SK-N-SH (cell line): ENCODE measurements at regions of chr20 and their contacts with region 1.

Region 1: GRCh38 chr20:51372176-51372803 is 170.2 kb downstream of the NFATC2 start:
- DNase-seq: peak; percentile 86
- H3K4me3 ChIP-seq: no peak overlapping the region
- H3K27ac ChIP-seq: peak overlapping the region in 1 of 2 experiments; percentile 32; a peak in 1 of 4 replicates
- H3K4me1 ChIP-seq: peaks cover 6 to 24% of the 10 kb centered on the region in 2 experiments; a peak in 2 of 4 replicates
- H3K27me3 ChIP-seq: no peaks in the 10 kb centered on the region
- CTCF ChIP-seq: peak; percentile 77
- EP300 ChIP-seq: no peak
- RAD21 ChIP-seq: peak; percentile 93

Region 2: DNA sequence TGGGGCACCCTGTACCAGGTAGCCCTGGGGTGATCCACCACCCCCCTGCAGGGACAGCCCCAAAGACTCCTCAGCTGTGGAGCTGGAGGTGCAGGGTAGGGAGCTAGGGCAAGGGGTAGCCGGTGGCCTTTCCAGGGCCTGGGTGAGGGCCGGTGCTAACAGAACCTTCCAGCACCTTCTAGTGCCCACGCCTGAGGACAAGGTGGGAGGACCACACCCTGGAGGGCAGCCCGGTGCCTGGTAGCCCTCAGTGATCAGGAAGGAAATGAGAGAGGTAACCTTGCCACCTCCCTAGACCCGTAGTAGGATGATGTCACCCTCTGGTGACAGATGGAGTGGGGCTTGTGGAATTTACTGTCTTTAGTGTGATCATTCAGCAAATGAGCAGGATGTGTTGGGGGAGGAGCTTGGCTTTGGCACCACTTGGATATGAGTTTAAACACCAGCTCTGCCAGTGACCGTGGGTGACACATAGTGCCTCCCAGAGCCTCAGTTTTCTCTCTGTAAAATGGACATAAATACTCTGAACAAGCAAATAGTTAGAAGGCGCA is 17.4 kb before region 1 on chr20:
- CTCF ChIA-PET with region 1: interaction called, 29 read pairs
- POLR2A ChIA-PET with region 1: no interaction called
- DNase-seq: no peak
- H3K4me3 ChIP-seq: no peak overlapping the region
- H3K27ac ChIP-seq: peak overlapping the region in 1 of 2 experiments; percentile 87; a peak in 2 of 4 replicates
- H3K4me1 ChIP-seq: peaks cover 0 to 22% of the 10 kb centered on the region in 2 experiments; a peak in 2 of 4 replicates
- H3K27me3 ChIP-seq: no peaks in the 10 kb centered on the region
- CTCF ChIP-seq: no peak
- EP300 ChIP-seq: no peak
- RAD21 ChIP-seq: no peak

Region 3: GRCh38 chr20:51360451-51361221 is 11.7 kb before region 1 on chr20:
- CTCF ChIA-PET with region 1: interaction called, 29 read pairs
- POLR2A ChIA-PET with region 1: no interaction called
- DNase-seq: no peak
- H3K4me3 ChIP-seq: no peak overlapping the region
- H3K27ac ChIP-seq: peak overlapping the region in 1 of 2 experiments; percentile 100; a peak in 2 of 4 replicates
- H3K4me1 ChIP-seq: peaks cover 0 to 14% of the 10 kb centered on the region in 2 experiments; a peak in 2 of 4 replicates
- H3K27me3 ChIP-seq: no peaks in the 10 kb centered on the region
- CTCF ChIP-seq: no peak
- EP300 ChIP-seq: peak in 1 of 2 experiments; percentile 95; a peak in 3 of 4 replicates
- RAD21 ChIP-seq: no peak

Region 4: DNA sequence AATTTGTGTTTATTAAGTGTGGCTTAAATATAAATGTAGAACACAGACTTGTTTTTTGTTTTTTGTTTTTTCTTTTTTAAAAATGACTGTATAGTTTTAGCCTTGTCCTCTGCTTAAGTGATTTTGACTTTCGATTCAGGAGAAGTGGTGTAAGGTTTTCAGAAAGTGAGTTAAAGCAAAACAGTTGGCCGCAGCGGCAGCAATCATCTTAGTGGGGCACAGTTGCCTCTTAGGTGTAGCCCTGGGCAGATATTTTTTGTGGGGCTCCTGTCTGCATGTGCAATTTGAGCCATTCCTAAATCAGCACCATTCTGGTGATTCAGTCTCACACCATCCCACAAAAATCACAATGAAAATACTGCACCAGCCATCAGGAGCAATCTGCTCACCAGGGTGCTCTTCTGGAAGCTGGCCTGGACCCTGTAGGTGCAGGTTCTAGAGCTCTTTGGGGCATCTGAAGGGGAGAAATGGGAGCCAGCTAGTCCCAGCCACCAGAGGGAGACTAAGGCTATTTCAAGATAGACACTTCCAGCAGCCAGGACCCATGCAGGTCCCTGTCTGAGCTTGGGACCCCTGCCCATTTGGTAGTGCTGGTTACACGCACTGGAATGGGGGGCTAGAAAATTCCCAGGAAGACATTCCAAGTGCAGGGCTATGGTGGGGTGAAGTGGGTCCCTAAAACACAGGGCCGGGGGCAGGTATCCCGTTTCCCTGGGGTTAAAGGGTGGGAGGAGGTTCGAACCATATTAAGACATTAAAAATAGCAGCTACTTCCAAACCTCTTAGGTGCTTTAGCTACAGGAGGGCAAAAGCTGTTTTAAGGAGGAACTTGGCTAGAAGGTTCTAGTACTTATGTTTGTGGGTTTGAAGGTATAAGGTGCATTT is 13.6 kb after region 1 on chr20:
- CTCF ChIA-PET with region 1: interaction called, 26 read pairs
- POLR2A ChIA-PET with region 1: no interaction called
- DNase-seq: peak; percentile 56
- H3K4me3 ChIP-seq: no peak overlapping the region
- H3K27ac ChIP-seq: no peak overlapping the region
- H3K4me1 ChIP-seq: peaks cover 0 to 10% of the 10 kb centered on the region in 2 experiments; a peak in 2 of 4 replicates
- H3K27me3 ChIP-seq: no peaks in the 10 kb centered on the region
- CTCF ChIP-seq: peak; percentile 64
- EP300 ChIP-seq: no peak
- RAD21 ChIP-seq: peak; percentile 76

Region 5: GRCh38 chr20:51624157-51624731 is 252.0 kb after region 1 on chr20:
- CTCF ChIA-PET with region 1: interaction called, 28 read pairs
- POLR2A ChIA-PET with region 1: no interaction called
- DNase-seq: peak; percentile 77
- H3K4me3 ChIP-seq: no peak overlapping the region
- H3K27ac ChIP-seq: no peak overlapping the region
- H3K4me1 ChIP-seq: 0 out of 4 replicates have a peak, but pooled peaks cover 0 to 4% of the 10 kb centered on the region in 2 experiments
- H3K27me3 ChIP-seq: no peaks in the 10 kb centered on the region
- CTCF ChIP-seq: peak; percentile 73
- EP300 ChIP-seq: no peak
- RAD21 ChIP-seq: peak; percentile 65

Region 6: DNA sequence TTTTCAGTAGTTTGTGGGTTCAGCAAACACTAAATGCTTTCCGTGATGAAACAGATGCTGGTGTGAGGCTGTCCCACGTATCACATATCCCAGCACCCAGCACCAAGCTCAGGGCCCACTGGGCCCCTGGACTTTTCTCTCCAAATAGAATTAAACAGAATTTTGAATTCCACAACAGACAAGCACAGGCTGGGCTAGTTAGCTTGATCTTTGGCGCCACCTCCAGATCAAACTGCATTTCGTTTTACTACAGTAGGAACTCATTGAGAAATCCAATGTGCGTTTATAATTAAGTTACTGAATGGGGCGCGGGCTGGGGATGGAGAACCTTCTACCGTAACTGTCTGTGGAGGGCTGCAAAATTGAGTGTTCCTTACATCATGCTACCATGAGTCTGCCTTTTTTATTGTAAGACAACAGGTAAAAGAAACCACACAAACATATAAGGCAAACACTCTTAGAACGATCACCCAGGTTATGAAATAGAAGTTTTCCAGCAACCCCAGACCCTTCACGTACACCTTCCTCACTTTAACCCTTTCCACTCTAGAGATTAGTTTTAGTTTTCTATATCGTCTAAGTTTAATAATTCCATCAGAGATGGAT is 711.4 kb after region 1 on chr20:
- CTCF ChIA-PET with region 1: interaction called, 12 read pairs
- POLR2A ChIA-PET with region 1: no interaction called
- DNase-seq: peak; percentile 80
- H3K4me3 ChIP-seq: no peak overlapping the region; a peak in 1 of 4 replicates
- H3K27ac ChIP-seq: no peak overlapping the region
- H3K4me1 ChIP-seq: no peaks in the 10 kb centered on the region; a peak in 1 of 4 replicates
- H3K27me3 ChIP-seq: no peaks in the 10 kb centered on the region
- CTCF ChIP-seq: peak; percentile 82
- EP300 ChIP-seq: 0 out of 4 replicates have a peak, but pooled peaks of 1 of the 2 experiments have one; percentile 12
- RAD21 ChIP-seq: peak; percentile 99